PC-3 (cell line): ENCODE measurements at regions of chr12 and their contacts with region 1.

Region 1: DNA sequence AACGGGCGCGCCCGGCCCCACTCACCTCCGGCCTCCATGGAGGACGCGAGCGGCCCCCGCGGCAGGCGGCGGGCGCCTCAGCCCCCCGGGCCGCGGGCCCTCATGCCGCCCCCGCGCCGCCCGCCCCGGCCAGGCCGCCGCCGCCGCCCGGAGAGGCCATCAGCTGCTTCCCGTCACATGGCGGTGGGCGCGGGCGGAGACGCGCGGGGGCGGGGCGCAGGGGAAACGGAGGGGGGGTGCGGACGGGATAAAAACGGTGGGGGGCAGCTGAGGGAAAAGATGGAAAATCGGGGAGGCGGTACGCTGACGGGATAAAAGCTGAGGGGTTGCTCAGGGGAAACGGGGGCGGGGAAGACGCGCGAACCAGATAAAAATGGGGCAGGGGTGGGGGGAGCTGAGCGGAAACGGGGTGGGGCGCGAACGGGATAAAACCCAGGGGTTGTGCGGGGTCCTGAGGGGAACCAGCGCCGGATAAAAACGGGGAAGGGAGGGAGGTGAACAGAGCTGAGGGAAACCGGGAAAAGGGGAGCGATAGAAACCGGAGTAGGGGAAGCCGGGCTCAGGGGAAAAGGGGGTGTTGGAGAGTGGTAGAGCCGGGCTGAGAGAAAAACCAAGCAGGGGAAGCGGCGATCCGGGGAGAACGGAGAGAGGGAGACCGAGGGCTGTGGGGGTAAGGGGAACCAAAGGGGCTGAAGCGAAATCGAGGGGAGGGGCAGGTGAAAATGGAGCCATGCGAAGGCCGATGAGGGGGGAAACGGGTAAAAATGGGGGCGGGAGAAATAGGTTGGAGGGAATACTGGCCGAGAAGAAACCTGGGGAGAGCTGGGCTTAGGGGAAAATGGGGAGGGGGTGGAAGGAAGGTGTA is at the start of gene WSB2:
- DNase-seq: peak; percentile 41
- ATAC-seq: peak; percentile 6
- H3K4me3 ChIP-seq: peak within 1 kb of the TSS; percentile 93
- H3K27ac ChIP-seq: peak within 1 kb of the TSS; percentile 86
- H3K4me1 ChIP-seq: peaks cover 40% of the 10 kb centered on the region
- H3K27me3 ChIP-seq: no peaks in the 10 kb centered on the region
- CTCF ChIP-seq: no peak
- total RNA-seq, gene WSB2: 166 and 203 TPM in 2 replicates

Region 2: GRCh38 chr12:118103604-118104382 is 42.5 kb after region 1 on chr12 and contains the start of gene VSIG10:
- CTCF ChIA-PET with region 1: no interaction called
- POLR2A ChIA-PET with region 1: interaction called, 5 read pairs
- intact Hi-C with region 1: loop called (anchors 1 kb)
- DNase-seq: peak; percentile 90
- ATAC-seq: peak; percentile 82
- H3K4me3 ChIP-seq: peak within 1 kb of the TSS; percentile 94
- H3K27ac ChIP-seq: peak within 1 kb of the TSS; percentile 38
- H3K4me1 ChIP-seq: peaks cover 21% of the 10 kb centered on the region
- H3K27me3 ChIP-seq: no peaks in the 10 kb centered on the region
- CTCF ChIP-seq: no peak
- total RNA-seq, gene VSIG10: 60.8 and 68.8 TPM in 2 replicates

Region 3: DNA sequence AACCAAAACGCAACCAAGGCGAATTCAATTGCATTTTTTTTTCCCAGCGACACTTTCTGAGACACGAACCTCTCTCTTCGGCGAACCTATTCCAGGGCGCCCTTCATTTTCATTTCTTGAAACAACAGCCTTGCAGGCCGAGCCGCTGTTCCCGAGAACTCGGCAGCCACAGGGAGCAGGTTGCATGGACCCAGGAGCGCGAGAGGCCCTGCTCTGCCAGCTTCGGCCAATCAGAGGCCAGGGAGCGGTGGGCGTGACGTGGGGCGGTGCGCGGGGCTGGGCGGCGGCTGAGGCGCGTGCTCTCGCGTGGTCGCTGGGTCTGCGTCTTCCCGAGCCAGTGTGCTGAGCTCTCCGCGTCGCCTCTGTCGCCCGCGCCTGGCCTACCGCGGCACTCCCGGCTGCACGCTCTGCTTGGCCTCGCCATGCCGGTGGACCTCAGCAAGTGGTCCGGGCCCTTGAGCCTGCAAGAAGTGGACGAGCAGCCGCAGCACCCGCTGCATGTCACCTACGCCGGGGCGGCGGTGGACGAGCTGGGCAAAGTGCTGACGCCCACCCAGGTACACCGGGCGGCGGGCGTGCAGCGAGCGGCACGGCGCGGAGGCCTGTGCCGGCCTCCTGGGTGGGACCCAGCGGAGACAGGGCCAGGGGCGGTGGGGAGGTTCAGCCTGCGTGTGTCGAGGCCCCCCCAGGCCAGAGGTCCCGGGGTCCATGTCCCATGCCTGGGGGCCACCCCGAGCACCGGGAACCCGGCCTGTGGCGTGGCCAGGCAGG is 74.7 kb after region 1 on chr12 and contains the start of gene PEBP1:
- CTCF ChIA-PET with region 1: no interaction called
- POLR2A ChIA-PET with region 1: interaction called, 3 read pairs
- intact Hi-C with region 1: loop called (anchors 5 kb)
- DNase-seq: peak; percentile 95
- ATAC-seq: peak; percentile 97
- H3K4me3 ChIP-seq: peak within 1 kb of the TSS; percentile 97
- H3K27ac ChIP-seq: 0 out of 2 replicates have a peak within 1 kb of the TSS, but pooled peaks have one; percentile 1
- H3K4me1 ChIP-seq: peaks cover 28% of the 10 kb centered on the region
- H3K27me3 ChIP-seq: no peaks in the 10 kb centered on the region
- CTCF ChIP-seq: no peak
- total RNA-seq, gene PEBP1: 313 and 368 TPM in 2 replicates